H1 (cell line): ENCODE measurements at regions of chr19 and their contacts with region 1.

Region 1: GRCh38 chr19:4791170-4792018 is at the start of gene FEM1A:
- DNase-seq: peak; percentile 99
- H3K4me3 ChIP-seq: peak within 1 kb of the TSS; percentile 80 to 86 (median 83)
- H3K27ac ChIP-seq: peak within 1 kb of the TSS; percentile 95
- H3K4me1 ChIP-seq: peaks cover 0 to 8% (median 1%) of the 10 kb centered on the region in 4 experiments; a peak in 4 of 7 replicates
- H3K27me3 ChIP-seq: no peaks in the 10 kb centered on the region
- CTCF ChIP-seq: peak; percentile 88 to 97 (median 91)
- EP300 ChIP-seq: no peak
- POLR2A ChIP-seq: peak; percentile 73 to 82
- RAD21 ChIP-seq: peak; percentile 81 to 82
- total RNA-seq, gene FEM1A: 16.1 and 16.4 TPM in 2 replicates

Region 2: GRCh38 chr19:4723367-4724187 is 67.8 kb before region 1 on chr19 and contains the start of gene DPP9:
- CTCF ChIA-PET with region 1: interaction called, 212 read pairs
- POLR2A ChIA-PET with region 1: interaction called, 8 read pairs
- DNase-seq: peak; percentile 98 to 99
- H3K4me3 ChIP-seq: peak within 1 kb of the TSS; percentile 86 to 95 (median 90)
- H3K27ac ChIP-seq: peak within 1 kb of the TSS; percentile 56; the same call in 1 of the 2 replicates
- H3K4me1 ChIP-seq: peaks cover 0 to 5% (median 4%) of the 10 kb centered on the region in 4 experiments; a peak in 4 of 7 replicates
- H3K27me3 ChIP-seq: no peaks in the 10 kb centered on the region
- CTCF ChIP-seq: peak in 1 of 3 experiments; percentile 13; a peak in 1 of 4 replicates
- EP300 ChIP-seq: peak in 1 of 2 experiments; percentile 100; a peak in 2 of 3 replicates
- POLR2A ChIP-seq: peak in 1 of 2 experiments; percentile 71; a peak in 2 of 3 replicates
- RAD21 ChIP-seq: no peak
- total RNA-seq, gene DPP9: 40.7 and 46.8 TPM in 2 replicates

Region 3: GRCh38 chr19:4759388-4760284 is 31.8 kb before region 1 on chr19:
- CTCF ChIA-PET with region 1: interaction called, 11 read pairs
- POLR2A ChIA-PET with region 1: no interaction called
- DNase-seq: peak; percentile 89 to 93
- H3K4me3 ChIP-seq: peak overlapping the region; percentile 2 to 53 (median 32); a peak in 7 of 8 replicates
- H3K27ac ChIP-seq: no peak overlapping the region
- H3K4me1 ChIP-seq: peaks cover 0 to 3% (median 2%) of the 10 kb centered on the region in 4 experiments; a peak in 3 of 7 replicates
- H3K27me3 ChIP-seq: peaks cover 0 to 10% (median 6%) of the 10 kb centered on the region in 4 experiments; a peak in 5 of 7 replicates
- CTCF ChIP-seq: no peak
- EP300 ChIP-seq: no peak
- POLR2A ChIP-seq: no peak
- RAD21 ChIP-seq: no peak

Region 4: DNA sequence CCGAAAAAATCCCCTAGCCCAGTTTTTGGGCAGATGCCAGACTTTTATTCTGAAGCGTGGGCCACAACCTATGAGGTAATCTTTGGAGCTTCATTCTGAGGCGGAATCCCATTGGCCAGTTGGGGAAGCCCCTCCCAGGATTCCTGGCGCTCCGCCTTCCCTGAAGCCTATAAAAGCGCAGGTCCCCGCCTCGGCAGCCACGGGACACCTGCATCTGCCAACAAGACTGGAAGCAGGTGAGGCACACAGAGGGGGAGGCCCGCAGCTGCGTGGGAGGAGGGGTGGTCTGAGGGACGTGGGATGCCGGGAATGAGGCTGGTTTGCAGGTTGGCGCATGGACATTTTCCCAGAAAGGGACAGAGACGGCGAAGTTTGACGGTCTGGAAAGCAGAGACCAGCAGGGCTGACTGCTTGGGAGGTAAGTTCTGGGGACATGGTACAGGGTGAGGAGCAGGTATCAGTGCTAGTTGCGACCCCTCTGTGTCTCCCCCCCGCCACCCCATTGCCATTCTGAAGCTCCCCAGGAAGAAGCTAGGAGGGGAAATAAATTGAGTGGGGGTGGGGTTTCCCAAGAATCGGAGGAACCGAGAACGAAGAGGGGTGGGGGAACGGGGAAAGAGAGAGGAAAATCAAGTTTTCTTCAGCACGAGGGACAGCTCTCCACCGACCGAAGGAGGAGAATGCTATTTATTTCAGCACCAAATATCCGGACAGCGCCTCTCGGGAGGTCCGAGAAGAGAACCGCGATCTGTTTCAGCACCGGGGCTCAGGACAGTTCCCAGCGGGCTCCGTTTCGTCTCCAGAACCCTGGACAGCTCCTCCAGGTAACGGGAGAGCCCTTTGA is 22.2 kb before region 1 on chr19:
- CTCF ChIA-PET with region 1: interaction called, 15 read pairs
- POLR2A ChIA-PET with region 1: interaction called, 16 read pairs
- DNase-seq: peak; percentile 57 to 99
- H3K4me3 ChIP-seq: peak overlapping the region in 2 of 4 experiments; percentile 14 to 17; a peak in 2 of 8 replicates
- H3K27ac ChIP-seq: no peak overlapping the region
- H3K4me1 ChIP-seq: peaks cover 0 to 3% (median 0%) of the 10 kb centered on the region in 4 experiments; a peak in 1 of 7 replicates
- H3K27me3 ChIP-seq: 0 out of 7 replicates have a peak, but pooled peaks cover 0 to 2% (median 0%) of the 10 kb centered on the region in 4 experiments
- CTCF ChIP-seq: no peak
- EP300 ChIP-seq: peak in 1 of 2 experiments; percentile 78; a peak in 2 of 3 replicates
- POLR2A ChIP-seq: peak; percentile 62 to 68
- RAD21 ChIP-seq: 0 out of 4 replicates have a peak, but pooled peaks of 1 of the 2 experiments have one; percentile 6

Region 5: GRCh38 chr19:4803736-4804695 is 12.6 kb after region 1 on chr19:
- CTCF ChIA-PET with region 1: interaction called, 40 read pairs
- POLR2A ChIA-PET with region 1: interaction called, 16 read pairs
- DNase-seq: peak; percentile 57 to 95
- H3K4me3 ChIP-seq: no peak overlapping the region
- H3K27ac ChIP-seq: no peak overlapping the region
- H3K4me1 ChIP-seq: no peaks in the 10 kb centered on the region
- H3K27me3 ChIP-seq: no peaks in the 10 kb centered on the region
- CTCF ChIP-seq: peak; percentile 99 to 100 (median 99)
- EP300 ChIP-seq: no peak
- POLR2A ChIP-seq: no peak
- RAD21 ChIP-seq: peak; percentile 93 to 95